Activated naive CD4-positive, alpha-beta T cell treated with anti-CD3 and anti-CD28 coated beads for 36 hours (primary cell): ENCODE measurements at regions of chr12 and their contacts with region 1.

Region 1: DNA sequence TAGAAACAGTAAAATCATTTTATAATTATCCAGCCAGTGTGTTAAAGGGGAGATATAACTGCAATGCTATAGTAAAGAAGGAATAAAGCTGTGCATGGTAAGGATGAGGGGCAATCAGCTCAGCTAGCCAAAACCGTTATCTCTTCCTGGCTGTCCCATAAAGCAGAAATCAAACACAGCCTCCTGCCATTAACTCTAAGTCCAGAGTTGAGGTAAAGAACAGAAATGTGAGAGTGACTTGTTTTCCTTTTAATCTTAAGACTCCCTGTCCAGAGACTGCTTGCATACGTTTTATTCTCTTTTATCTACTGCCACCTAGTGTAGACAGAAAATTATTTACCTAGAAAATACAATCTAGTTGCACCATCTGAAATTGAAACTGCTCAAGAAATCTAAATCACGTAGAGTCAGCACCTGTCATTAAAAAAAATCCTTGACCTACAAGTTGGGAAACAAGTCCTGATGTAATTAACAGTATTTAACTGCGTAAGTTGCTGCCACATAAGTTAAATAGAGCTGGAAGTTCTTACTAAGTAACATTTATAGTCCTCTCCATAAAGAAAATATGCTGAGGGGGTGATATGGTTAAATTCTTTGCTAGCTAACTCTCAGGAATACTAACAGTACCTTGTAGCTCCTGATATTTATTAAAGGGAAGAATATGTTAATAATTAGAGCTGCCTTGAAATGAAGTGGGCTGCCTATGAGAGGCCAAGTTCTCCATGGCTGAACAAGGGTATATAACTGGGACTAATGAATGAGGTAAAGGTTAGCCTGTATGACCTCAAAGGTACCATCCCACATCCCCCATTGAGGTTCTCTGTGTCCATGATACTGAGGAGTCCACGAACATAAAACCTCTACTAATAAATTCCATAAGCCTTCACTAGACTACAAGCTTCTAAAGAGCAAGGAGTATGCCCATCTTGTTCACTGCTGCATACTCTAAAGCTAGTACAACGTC is 62.7 kb downstream of the GALNT4 start:
- DNase-seq: no peak
- H3K4me3 Mint-ChIP-seq: peak overlapping the region; percentile 15
- H3K27ac Mint-ChIP-seq: peak overlapping the region; percentile 48
- H3K4me1 Mint-ChIP-seq: peaks cover 13% of the 10 kb centered on the region
- H3K27me3 Mint-ChIP-seq: no peaks in the 10 kb centered on the region

Region 2: GRCh38 chr12:89051065-89051677 is 410.8 kb before region 1 on chr12:
- CTCF ChIA-PET with region 1: interaction called, 24 read pairs
- intact Hi-C with region 1: loop called (anchors 1 kb)
- DNase-seq: peak; percentile 37
- H3K4me3 Mint-ChIP-seq: no peak overlapping the region
- H3K27ac Mint-ChIP-seq: no peak overlapping the region
- H3K4me1 Mint-ChIP-seq: peaks cover 10% of the 10 kb centered on the region
- H3K27me3 Mint-ChIP-seq: no peaks in the 10 kb centered on the region

Region 3: DNA sequence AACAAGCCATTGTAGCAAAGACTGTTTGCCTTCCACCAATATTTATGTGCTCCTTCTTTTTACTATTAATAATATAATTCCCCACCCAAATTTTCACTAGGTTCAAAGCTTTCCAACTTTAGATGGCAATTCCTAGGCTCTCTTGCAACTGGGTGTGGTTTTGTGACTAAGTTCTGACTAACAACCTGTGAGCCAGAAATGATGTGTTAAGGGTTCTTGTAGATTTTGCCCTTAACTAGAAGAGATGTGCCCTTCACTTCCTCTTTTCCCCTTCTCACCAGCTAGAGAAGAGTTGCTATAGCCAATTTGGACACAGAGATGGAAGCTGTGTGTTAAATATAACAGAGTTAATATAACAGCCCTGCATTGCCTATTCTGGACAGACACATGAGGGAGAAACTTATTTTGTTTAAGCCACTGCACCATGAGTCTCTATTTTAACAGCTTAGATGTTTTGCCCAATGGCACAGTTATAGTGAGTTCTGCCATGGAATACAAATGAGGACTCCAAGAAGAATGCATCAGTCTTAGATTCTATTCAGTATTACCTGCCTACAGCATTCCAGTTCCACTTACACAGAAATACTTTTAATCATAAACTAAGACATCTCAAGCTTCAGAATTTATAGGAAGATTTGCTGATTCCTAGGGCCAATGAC is 325.8 kb before region 1 on chr12:
- CTCF ChIA-PET with region 1: no interaction called
- intact Hi-C with region 1: loop called (anchors 5 kb)
- DNase-seq: peak; percentile 9
- H3K4me3 Mint-ChIP-seq: no peak overlapping the region
- H3K27ac Mint-ChIP-seq: no peak overlapping the region
- H3K4me1 Mint-ChIP-seq: peaks cover 22% of the 10 kb centered on the region
- H3K27me3 Mint-ChIP-seq: no peaks in the 10 kb centered on the region

Region 4: DNA sequence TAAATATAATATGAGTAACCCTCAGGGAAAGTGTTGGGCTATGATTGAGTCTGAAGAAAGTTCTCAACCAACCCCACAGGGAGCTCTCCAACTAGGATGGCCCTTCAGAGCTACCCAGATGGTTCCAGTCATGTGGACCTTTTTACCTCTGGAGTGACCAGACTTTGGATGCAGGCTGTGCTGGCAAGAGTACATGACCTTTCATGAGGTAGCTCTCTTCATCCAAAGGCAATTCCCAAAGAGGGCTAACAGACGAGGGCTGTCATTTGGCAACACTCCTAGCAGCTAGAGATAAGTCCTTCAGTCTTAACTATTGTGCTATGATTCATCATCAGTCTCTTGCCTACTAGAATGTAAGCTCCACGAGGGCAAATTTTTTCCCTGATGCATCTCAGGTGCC is 185.1 kb before region 1 on chr12:
- CTCF ChIA-PET with region 1: no interaction called
- intact Hi-C with region 1: no loop called
- DNase-seq: no peak
- H3K4me3 Mint-ChIP-seq: no peak overlapping the region
- H3K27ac Mint-ChIP-seq: no peak overlapping the region
- H3K4me1 Mint-ChIP-seq: peaks cover 24% of the 10 kb centered on the region
- H3K27me3 Mint-ChIP-seq: no peaks in the 10 kb centered on the region

Region 5: DNA sequence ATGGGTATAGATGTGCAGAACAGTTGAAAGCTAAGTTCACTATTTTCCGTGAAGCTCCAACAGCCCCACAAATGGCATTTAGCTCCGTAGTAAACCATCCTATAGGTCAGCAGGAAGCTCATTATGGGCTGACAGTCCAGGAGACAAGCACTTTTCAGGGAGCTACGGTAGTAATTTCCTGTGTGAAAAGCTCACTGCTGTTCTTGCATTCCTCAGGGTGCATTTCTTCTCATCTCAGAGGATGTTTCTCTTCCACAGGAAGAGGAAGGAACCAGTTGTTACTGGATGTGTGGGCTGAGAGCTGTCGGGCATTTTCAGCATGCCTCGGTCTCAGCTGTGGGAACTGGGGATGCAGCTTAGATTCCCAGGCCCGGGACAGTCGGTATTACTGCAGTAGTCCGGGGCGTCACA is 10.1 kb before region 1 on chr12:
- CTCF ChIA-PET with region 1: interaction called, 15 read pairs
- intact Hi-C with region 1: no loop called
- DNase-seq: no peak
- H3K4me3 Mint-ChIP-seq: no peak overlapping the region
- H3K27ac Mint-ChIP-seq: no peak overlapping the region
- H3K4me1 Mint-ChIP-seq: peaks cover 2% of the 10 kb centered on the region
- H3K27me3 Mint-ChIP-seq: no peaks in the 10 kb centered on the region

Region 6: GRCh38 chr12:89477633-89478279 is 15.8 kb after region 1 on chr12:
- CTCF ChIA-PET with region 1: no interaction called
- intact Hi-C with region 1: no loop called
- DNase-seq: no peak
- H3K4me3 Mint-ChIP-seq: no peak overlapping the region
- H3K27ac Mint-ChIP-seq: no peak overlapping the region
- H3K4me1 Mint-ChIP-seq: peaks cover 5% of the 10 kb centered on the region
- H3K27me3 Mint-ChIP-seq: no peaks in the 10 kb centered on the region

Region 7: DNA sequence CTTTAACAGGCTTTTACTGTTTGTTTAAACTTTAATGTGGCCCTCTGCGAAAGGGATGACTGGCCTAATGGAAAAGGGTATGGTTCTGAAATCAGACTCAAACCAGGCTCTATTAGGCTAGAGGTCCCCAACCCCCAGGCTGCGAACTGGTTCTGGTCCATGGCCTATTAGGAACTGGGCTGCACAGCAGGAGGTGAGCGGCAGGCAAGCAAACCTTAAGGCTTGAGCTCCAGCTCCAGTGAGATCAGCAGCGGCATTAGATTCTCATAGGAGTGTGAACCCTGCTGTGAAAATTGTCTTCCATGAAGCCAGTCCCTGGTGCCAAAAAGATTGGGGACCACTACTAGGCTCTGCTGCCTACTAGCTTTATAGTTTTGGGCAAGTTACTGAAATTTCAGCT is 51.6 kb after region 1 on chr12:
- CTCF ChIA-PET with region 1: interaction called, 10 read pairs
- intact Hi-C with region 1: no loop called
- DNase-seq: no peak
- H3K4me3 Mint-ChIP-seq: no peak overlapping the region
- H3K27ac Mint-ChIP-seq: no peak overlapping the region
- H3K4me1 Mint-ChIP-seq: peaks cover 6% of the 10 kb centered on the region
- H3K27me3 Mint-ChIP-seq: no peaks in the 10 kb centered on the region

Region 8: GRCh38 chr12:89529738-89530137 is 67.8 kb after region 1 on chr12:
- CTCF ChIA-PET with region 1: interaction called, 4 read pairs
- intact Hi-C with region 1: loop called (anchors 1 kb)
- DNase-seq: no peak
- H3K4me3 Mint-ChIP-seq: no peak overlapping the region
- H3K27ac Mint-ChIP-seq: no peak overlapping the region
- H3K4me1 Mint-ChIP-seq: peaks cover 9% of the 10 kb centered on the region
- H3K27me3 Mint-ChIP-seq: no peaks in the 10 kb centered on the region